Right ventricle myocardium inferior (tissue), 1 donor: ENCODE measurements at regions of chr16 and their contacts with region 1.

Region 1: DNA sequence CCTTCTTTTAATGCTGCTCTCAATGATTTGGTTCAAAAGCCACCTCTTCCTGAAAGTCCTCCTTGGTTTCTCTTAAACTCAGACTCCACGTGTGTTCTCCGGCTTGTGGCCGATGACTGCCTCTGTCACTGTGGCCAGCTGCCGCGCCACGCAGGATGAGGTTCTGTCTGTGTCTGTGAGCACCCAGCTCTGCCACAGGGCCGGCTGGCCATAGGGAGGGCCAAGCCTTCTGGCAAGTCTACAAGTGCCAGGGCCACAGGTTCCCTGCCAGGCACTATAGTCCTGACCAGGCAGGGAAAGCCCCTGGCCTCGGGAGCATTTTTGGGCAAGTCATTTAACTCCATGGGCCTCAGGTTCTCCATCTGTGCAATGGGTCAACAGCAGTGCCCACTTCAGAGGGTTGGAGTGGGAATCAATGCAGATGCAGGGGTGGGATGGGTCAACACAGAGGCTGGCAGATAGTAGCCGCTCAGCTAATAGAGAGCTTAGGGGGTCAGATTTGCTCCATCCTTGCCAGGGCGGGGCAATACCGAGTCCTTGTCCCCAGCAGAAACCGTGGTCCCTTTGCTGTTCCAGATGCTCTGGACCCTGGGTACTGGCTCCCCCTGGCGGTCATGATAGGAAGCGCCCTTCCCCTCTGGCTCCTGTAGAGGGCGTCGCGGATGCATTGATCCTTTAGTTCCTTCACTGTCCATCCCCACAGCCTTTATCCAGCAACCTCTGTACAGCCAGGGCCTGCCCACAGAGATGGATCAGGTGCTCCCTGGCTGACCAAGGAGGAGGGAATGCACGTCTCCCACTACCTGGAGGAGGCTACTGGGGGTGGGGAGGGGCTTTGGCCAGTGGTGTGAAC is 19.3 kb upstream of the ADGRG3 start:
- DNase-seq: peak; percentile 88
- ATAC-seq: peak; percentile 64

Region 2: GRCh38 chr16:57513371-57514102 is 135.3 kb before region 1 on chr16:
- intact Hi-C with region 1: no loop called
- DNase-seq: no peak
- ATAC-seq: no peak

Region 3: DNA sequence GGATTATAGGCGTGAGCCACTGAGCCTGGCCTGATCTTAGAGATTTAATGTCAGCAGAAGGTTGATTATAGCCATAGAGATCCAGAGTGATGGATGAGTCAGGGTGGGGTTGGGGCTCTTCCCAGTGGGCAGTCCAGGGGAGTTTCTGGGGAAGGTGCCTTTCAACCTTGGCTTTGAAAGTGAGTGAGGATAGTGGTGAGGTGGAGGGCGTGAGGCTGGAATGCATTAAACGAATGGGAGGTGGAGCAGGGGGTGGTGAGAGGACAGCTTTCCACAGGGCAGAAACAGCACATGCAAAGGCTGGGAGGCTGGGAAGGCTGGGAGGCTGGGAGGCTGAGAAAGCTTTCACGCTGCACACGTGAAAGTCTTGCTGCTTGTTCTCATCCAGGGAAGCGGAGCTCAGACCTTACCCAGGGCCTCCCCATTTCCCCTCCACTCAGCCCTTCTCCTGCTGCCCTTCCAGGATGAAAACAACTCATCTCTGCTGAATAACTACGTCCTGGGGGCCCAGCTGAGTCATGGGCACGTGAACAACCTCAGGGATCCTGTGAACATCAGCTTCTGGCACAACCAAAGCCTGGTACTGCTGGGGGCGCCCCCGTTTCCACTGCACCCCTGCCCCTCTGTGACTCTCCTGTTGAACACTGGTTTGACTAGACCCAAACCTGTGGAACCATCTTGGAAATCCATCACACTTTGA is 84.1 kb before region 1 on chr16:
- intact Hi-C with region 1: no loop called
- DNase-seq: no peak
- ATAC-seq: no peak

Region 4: GRCh38 chr16:57591086-57591869 is 57.5 kb before region 1 on chr16:
- intact Hi-C with region 1: loop called (anchors 1 kb)
- DNase-seq: peak; percentile 87
- ATAC-seq: peak; percentile 90

Region 5: GRCh38 chr16:57600048-57600835 is 48.6 kb before region 1 on chr16:
- intact Hi-C with region 1: loop called (anchors 2 kb)
- DNase-seq: no peak
- ATAC-seq: peak; percentile 70

Region 6: DNA sequence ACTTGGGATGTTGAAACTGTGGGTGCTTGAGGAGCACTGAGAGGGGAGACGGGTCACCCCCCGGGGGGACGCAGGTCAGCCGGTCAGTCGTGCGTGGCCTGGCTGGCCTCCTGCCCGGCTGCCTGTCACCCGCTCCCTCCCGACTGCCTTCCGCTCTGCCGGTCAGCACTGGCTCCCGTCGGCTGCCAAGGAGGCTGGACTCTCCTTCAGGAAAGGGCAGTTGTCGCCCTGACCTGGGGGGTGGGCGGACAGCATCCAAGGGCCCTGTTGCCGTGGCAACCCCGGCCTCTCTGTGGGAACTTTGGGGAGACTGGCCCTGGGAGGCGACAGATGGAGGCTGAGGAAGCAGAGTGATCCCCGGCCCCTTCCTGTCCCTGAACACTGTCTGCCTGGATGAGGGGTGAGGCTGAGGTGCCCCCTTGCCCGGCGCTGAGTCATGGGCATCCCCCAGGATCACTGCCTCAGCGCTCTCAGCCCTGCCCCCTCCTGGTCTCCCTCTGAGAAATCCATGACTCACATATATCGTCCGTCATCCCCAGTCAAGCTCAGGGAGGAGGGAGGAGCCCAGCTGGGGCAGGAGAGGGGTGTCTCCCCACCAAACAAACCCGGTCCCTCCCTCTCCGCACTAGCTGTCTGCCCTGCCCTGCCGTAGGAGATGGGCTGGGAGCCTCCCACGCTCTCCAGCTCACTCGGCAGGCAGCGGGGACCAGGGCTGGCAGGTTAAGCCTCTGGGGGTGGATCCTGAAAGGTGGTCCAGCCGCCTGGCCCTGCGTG is 20.6 kb before region 1 on chr16 and contains the start of gene ADGRG1:
- intact Hi-C with region 1: loop called (anchors 2 kb)
- DNase-seq: peak; percentile 80
- ATAC-seq: peak; percentile 69
- total RNA-seq, gene ADGRG1: 23.1 TPM

Region 7: DNA sequence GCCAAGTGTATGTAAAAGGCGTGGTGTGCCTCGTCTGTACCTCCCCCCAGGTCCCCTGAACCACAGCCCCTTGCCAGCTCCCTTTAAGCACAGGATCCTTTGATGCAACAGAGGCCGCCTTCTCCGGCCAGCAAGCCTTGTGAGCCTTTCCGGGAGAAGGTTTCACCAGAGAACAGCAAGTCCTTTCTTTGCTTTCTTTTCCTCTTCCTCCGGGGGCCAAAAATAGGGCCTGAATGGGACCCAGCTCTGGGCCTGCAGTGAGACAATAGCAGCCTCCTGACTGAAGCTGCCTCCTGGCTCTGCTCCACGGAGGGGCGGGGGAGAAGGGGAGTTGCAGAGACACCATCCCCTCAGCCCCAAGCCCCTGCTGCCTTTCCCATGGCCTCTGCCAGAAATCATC is 11.4 kb before region 1 on chr16:
- intact Hi-C with region 1: loop called (anchors 1 kb)
- DNase-seq: no peak
- ATAC-seq: peak; percentile 15

Region 8: GRCh38 chr16:57694725-57695679 is 46.2 kb after region 1 on chr16 and contains the start of gene DRC7:
- intact Hi-C with region 1: no loop called
- DNase-seq: no peak
- ATAC-seq: peak; percentile 44
- total RNA-seq, gene DRC7: not detected

Region 9: GRCh38 chr16:58551496-58551895 is 902.7 kb after region 1 on chr16:
- intact Hi-C with region 1: no loop called
- DNase-seq: no peak
- ATAC-seq: peak; percentile 89